ENCODE measurements at regions of chr20 and their contacts with region 1.

Region 1: GRCh38 chr20:48921151-48921898 is at the start of gene ARFGEF2:
- DNase-seq: peak; percentile 96
- ATAC-seq: peak; percentile 92
- H3K4me3 ChIP-seq: peak within 1 kb of the TSS; percentile 59 to 91 (median 86)
- H3K4me3 Mint-ChIP-seq: peak within 1 kb of the TSS; percentile 96
- H3K27ac ChIP-seq: peak within 1 kb of the TSS; percentile 88 to 91
- H3K27ac Mint-ChIP-seq: peak within 1 kb of the TSS; percentile 95
- H3K4me1 ChIP-seq: peaks cover 47 to 55% of the 10 kb centered on the region in 2 donors
- H3K4me1 Mint-ChIP-seq: peaks cover 49% of the 10 kb centered on the region
- H3K27me3 ChIP-seq: no peaks in the 10 kb centered on the region
- H3K27me3 Mint-ChIP-seq: no peaks in the 10 kb centered on the region
- CTCF ChIP-seq: no peak
- total RNA-seq, gene ARFGEF2: 34.3 and 41.3 TPM in 2 replicates

Region 2: DNA sequence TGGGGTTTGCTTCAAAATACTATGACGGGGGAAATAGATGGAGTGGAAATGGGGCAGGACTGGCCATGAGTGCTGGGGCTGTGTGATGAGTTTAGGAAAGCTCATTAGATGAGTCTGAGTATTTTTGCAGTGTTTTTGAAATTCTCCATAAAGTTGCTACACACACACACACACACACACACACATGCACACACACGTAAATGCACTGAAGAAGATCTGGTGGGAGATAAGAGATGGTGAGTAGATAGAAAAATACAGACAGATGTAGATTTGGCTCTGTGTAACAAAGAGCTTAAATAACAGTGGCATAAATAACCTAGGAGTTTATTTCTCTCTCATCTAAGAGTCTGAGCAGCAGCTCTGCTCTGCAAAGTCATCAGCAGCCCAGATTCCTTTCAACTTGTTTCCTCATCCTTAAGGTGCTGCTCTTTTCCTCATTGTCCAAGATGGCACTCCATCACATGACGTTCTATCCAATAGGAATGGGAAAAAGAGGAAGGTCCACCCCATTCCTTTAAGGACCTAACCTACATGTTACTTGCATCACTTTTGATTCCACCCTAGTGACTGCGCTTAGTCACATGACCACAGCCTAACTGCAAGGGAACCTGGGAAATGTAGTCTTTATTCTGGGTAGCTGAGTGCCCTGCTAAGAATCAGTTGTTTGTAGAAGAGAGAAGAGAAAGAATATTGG is 1950.3 kb before region 1 on chr20:
- CTCF ChIA-PET with region 1: no interaction called
- POLR2A ChIA-PET with region 1: no interaction called
- intact Hi-C with region 1: no loop called
- DNase-seq: peak; percentile 26
- ATAC-seq: no peak
- H3K4me3 ChIP-seq: no peak overlapping the region
- H3K4me3 Mint-ChIP-seq: no peak overlapping the region
- H3K27ac ChIP-seq: no peak overlapping the region
- H3K27ac Mint-ChIP-seq: no peak overlapping the region
- H3K4me1 ChIP-seq: no peaks in the 10 kb centered on the region
- H3K4me1 Mint-ChIP-seq: no peaks in the 10 kb centered on the region
- H3K27me3 ChIP-seq: no peaks in the 10 kb centered on the region
- H3K27me3 Mint-ChIP-seq: peaks cover 18% of the 10 kb centered on the region
- CTCF ChIP-seq: no peak

Region 3: DNA sequence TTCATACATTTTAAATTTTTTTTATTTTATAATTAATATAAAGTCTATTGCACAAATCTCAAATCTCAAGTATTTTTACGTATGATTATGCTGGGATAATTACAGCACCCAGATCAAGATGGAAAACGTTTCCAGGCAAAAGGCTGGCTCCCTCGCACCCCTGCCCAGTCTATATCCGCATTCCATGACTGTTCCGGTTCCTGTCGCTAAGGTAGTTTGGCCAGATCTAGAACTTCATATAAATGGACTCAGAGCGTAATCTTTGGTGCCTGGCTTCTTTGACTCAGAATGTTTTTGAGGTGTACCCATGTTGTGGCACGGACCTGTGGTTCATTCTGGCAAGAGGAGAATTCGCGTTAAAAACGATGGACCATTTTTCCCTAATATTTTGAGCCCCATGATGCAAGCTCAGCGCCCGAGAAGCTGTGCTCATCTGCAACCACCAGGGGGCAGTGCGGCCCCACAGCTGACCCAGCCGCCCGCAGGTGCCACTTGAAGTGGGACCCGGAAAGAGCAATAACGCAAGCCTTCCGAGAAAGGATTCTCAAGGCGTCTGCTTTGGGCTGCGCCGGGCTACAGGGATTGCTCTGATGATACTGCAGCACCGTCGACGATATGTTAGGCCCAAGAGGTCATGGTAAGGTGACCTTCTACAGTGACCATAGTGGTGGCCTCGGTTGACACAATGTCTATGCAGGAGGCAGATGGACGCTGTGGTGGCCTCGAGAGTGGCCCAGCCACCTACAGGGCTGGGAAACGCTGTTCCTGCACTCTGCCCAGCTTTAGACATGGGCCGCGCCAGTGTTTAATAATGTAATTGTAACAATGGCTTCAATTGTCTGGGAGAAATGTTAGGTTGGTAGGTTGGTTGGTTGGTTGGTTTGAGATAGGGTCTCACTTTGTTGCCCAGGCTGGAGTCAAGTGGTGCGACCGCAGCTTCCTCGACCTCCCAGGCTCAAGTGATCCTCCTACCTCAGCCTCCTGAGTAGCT is 1724.9 kb before region 1 on chr20:
- CTCF ChIA-PET with region 1: no interaction called
- POLR2A ChIA-PET with region 1: no interaction called
- intact Hi-C with region 1: no loop called
- DNase-seq: peak; percentile 81
- ATAC-seq: peak; percentile 82
- H3K4me3 ChIP-seq: peak overlapping the region in 2 of 5 experiments; percentile 12 to 33
- H3K4me3 Mint-ChIP-seq: peak overlapping the region; percentile 16
- H3K27ac ChIP-seq: no peak overlapping the region
- H3K27ac Mint-ChIP-seq: no peak overlapping the region
- H3K4me1 ChIP-seq: peaks cover 3 to 7% of the 10 kb centered on the region in 2 donors
- H3K4me1 Mint-ChIP-seq: peaks cover 5% of the 10 kb centered on the region
- H3K27me3 ChIP-seq: no peaks in the 10 kb centered on the region
- H3K27me3 Mint-ChIP-seq: no peaks in the 10 kb centered on the region
- CTCF ChIP-seq: peak; percentile 100

Region 4: GRCh38 chr20:48797275-48797825 is 124.0 kb before region 1 on chr20:
- CTCF ChIA-PET with region 1: no interaction called
- POLR2A ChIA-PET with region 1: no interaction called
- intact Hi-C with region 1: no loop called
- DNase-seq: no peak
- ATAC-seq: peak; percentile 39
- H3K4me3 ChIP-seq: no peak overlapping the region
- H3K4me3 Mint-ChIP-seq: peak overlapping the region; percentile 18
- H3K27ac ChIP-seq: peak overlapping the region in 1 of 2 donors; percentile 17
- H3K27ac Mint-ChIP-seq: peak overlapping the region; percentile 82
- H3K4me1 ChIP-seq: peaks cover 33 to 54% of the 10 kb centered on the region in 2 donors
- H3K4me1 Mint-ChIP-seq: peaks cover 72% of the 10 kb centered on the region
- H3K27me3 ChIP-seq: no peaks in the 10 kb centered on the region
- H3K27me3 Mint-ChIP-seq: no peaks in the 10 kb centered on the region
- CTCF ChIP-seq: no peak

Region 5: DNA sequence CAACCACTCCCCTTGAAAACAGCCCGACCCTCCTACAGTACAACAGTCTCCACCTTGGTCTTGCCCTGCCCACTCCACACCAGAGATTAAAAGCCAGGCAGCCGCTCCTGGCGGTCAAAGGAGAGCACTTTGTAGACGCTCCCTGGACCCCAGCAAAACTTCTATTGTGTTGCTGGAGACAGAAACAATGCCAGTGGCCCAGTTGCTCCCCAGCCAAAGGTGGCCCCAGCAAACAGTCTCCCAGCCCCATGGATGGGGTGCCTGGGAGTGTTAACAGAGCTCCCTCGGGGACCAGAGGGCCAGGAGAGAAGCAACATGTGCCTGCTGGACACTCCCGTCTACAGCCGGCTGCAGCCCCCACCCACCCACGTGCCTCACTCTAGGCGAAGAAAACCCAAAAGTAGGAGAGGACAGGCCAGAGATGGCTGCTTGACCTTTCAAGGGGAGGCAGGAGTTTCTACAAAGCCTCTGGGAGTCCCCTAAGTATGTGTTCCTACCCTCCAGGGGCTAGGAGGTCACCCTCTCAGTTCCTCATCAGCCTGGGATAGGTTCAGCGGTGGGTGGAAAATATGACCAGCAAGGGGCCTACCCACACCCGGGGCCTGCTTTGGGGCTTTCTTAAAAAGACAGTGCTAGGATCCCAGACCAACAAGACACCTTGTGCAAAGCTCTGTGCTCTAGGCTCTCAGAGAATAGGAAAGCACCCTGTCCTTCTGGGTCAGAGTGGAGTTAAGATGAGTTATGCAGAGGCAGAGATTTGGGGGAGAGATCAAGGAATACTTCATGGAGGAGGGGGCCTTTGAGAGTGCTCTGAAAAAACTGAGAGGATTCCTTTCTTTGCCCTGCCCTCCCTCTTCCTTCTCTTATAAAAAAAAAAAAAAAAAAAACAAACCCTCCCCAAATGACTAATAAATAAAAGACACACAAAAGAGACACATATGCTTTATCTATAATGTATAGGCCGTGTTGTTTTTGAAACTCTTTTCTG is 74.5 kb before region 1 on chr20:
- CTCF ChIA-PET with region 1: no interaction called
- POLR2A ChIA-PET with region 1: no interaction called
- intact Hi-C with region 1: loop called (anchors 1 kb)
- DNase-seq: peak; percentile 67
- ATAC-seq: peak; percentile 95
- H3K4me3 ChIP-seq: no peak overlapping the region
- H3K4me3 Mint-ChIP-seq: peak overlapping the region; percentile 64
- H3K27ac ChIP-seq: no peak overlapping the region
- H3K27ac Mint-ChIP-seq: peak overlapping the region; percentile 74
- H3K4me1 ChIP-seq: peaks cover 24 to 25% of the 10 kb centered on the region in 2 donors
- H3K4me1 Mint-ChIP-seq: peaks cover 41% of the 10 kb centered on the region
- H3K27me3 ChIP-seq: no peaks in the 10 kb centered on the region
- H3K27me3 Mint-ChIP-seq: no peaks in the 10 kb centered on the region
- CTCF ChIP-seq: no peak

Region 6: GRCh38 chr20:49046087-49046900 is 125.0 kb after region 1 on chr20 and contains the start of gene CSE1L:
- CTCF ChIA-PET with region 1: interaction called, 5 read pairs
- POLR2A ChIA-PET with region 1: no interaction called
- intact Hi-C with region 1: loop called (anchors 1 kb)
- DNase-seq: peak; percentile 97
- ATAC-seq: peak; percentile 85
- H3K4me3 ChIP-seq: peak within 1 kb of the TSS; percentile 83 to 100 (median 99)
- H3K4me3 Mint-ChIP-seq: peak within 1 kb of the TSS; percentile 96
- H3K27ac ChIP-seq: peak within 1 kb of the TSS; percentile 78 to 97
- H3K27ac Mint-ChIP-seq: peak within 1 kb of the TSS; percentile 98
- H3K4me1 ChIP-seq: peaks cover 14 to 24% of the 10 kb centered on the region in 2 donors
- H3K4me1 Mint-ChIP-seq: peaks cover 28% of the 10 kb centered on the region
- H3K27me3 ChIP-seq: no peaks in the 10 kb centered on the region
- H3K27me3 Mint-ChIP-seq: no peaks in the 10 kb centered on the region
- CTCF ChIP-seq: no peak
- total RNA-seq, gene CSE1L: 38.0 and 38.5 TPM in 2 replicates

Region 7: GRCh38 chr20:49303065-49303552 is 381.8 kb after region 1 on chr20:
- CTCF ChIA-PET with region 1: no interaction called
- POLR2A ChIA-PET with region 1: no interaction called
- intact Hi-C with region 1: no loop called
- DNase-seq: no peak
- ATAC-seq: no peak
- H3K4me3 ChIP-seq: no peak overlapping the region
- H3K4me3 Mint-ChIP-seq: no peak overlapping the region
- H3K27ac ChIP-seq: no peak overlapping the region
- H3K27ac Mint-ChIP-seq: no peak overlapping the region
- H3K4me1 ChIP-seq: no peaks in the 10 kb centered on the region
- H3K4me1 Mint-ChIP-seq: peaks cover 2% of the 10 kb centered on the region
- H3K27me3 ChIP-seq: no peaks in the 10 kb centered on the region
- H3K27me3 Mint-ChIP-seq: no peaks in the 10 kb centered on the region
- CTCF ChIP-seq: no peak

Region 8: GRCh38 chr20:49915378-49916145 is 994.2 kb after region 1 on chr20 and contains the start of gene SPATA2:
- CTCF ChIA-PET with region 1: no interaction called
- POLR2A ChIA-PET with region 1: no interaction called
- intact Hi-C with region 1: loop called (anchors 5 kb)
- DNase-seq: peak; percentile 99
- ATAC-seq: peak; percentile 81
- H3K4me3 ChIP-seq: peak within 1 kb of the TSS; percentile 79 to 96 (median 93)
- H3K4me3 Mint-ChIP-seq: peak within 1 kb of the TSS; percentile 99
- H3K27ac ChIP-seq: peak within 1 kb of the TSS; percentile 97 to 99
- H3K27ac Mint-ChIP-seq: peak within 1 kb of the TSS; percentile 100
- H3K4me1 ChIP-seq: peaks cover 12 to 26% of the 10 kb centered on the region in 2 donors
- H3K4me1 Mint-ChIP-seq: peaks cover 31% of the 10 kb centered on the region
- H3K27me3 ChIP-seq: no peaks in the 10 kb centered on the region
- H3K27me3 Mint-ChIP-seq: no peaks in the 10 kb centered on the region
- CTCF ChIP-seq: no peak
- total RNA-seq, gene SPATA2: 10.6 and 10.7 TPM in 2 replicates